CD14-positive monocyte (primary cell): ENCODE measurements at regions of chr4 and their contacts with region 1.

Region 1: DNA sequence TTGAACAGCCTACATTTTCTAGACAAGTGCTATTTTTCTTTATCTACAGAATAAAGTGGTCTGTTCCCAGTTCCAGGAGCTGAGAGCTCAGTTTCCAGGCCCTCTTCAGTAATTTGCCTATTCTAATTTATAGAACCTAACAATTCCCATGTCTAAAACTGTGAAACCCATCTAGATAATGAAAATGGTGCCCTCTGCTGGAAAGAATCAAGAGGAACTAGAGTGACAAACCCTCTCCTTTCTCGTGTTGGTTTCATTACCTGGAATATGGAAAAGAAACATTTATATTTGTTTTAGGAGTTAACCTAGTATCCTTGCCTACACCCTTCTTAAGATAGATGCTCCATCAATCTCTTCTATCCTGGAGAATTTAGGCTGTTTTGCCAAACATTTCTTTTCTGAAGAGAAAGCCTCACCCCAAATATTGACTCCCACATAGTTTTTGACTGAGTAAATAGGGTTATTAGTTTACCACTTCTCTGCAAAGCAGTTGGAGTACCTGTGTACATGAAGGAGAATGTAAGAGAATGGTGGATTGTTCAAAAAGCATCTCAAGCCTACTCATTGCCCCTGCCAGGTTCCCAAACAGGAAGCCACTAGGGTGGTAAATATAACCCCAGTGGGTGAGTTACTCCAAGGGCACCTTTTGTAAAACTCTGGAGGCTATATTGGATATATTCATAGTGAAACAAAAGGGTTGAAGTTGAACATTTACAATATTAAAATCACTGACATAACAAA is 121.6 kb downstream of the RASL11B start:
- DNase-seq: peak; percentile 9 to 44 (median 22)
- H3K4me3 ChIP-seq: no peak overlapping the region
- H3K4me3 Mint-ChIP-seq: no peak overlapping the region
- H3K27ac ChIP-seq: no peak overlapping the region
- H3K27ac Mint-ChIP-seq: no peak overlapping the region
- H3K4me1 ChIP-seq: no peaks in the 10 kb centered on the region
- H3K4me1 Mint-ChIP-seq: no peaks in the 10 kb centered on the region
- H3K27me3 ChIP-seq: no peaks in the 10 kb centered on the region
- H3K27me3 Mint-ChIP-seq: no peaks in the 10 kb centered on the region
- CTCF ChIP-seq: peak; percentile 76

Region 2: DNA sequence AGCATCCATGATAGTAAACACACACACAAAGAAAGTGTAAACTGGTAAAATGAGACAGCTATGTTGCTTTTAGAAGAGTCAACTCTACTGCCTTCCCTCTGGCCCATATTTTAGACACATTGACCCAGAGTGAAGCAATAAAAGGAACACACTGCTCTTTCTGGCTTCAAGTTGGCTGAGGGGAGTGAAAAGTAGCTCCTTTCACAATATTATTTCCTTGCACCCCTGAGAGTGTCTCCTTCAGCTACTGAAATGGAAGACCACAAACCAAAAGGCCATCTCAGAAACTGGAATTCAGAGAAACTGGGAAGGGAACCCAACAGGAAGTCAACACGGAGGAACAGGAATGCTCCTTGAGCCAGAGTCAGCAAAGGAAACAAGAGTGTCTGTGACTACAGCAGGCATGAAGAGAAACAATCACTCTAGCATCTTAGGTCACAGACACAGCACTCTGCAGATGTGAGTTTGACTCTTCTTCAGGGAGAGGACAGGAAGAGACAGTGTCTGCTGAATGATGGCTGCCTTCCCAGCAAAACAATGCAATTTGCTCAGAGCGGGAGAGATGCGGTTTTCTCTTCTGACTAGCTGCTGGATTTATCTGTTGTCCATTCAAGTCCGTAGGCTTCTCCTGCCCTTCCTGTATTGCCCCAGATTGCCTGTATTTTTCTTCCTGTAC is 826.0 kb before region 1 on chr4:
- intact Hi-C with region 1: no loop called
- DNase-seq: no peak
- H3K4me3 ChIP-seq: no peak overlapping the region
- H3K4me3 Mint-ChIP-seq: no peak overlapping the region
- H3K27ac ChIP-seq: no peak overlapping the region
- H3K27ac Mint-ChIP-seq: no peak overlapping the region
- H3K4me1 ChIP-seq: no peaks in the 10 kb centered on the region
- H3K4me1 Mint-ChIP-seq: no peaks in the 10 kb centered on the region
- H3K27me3 ChIP-seq: peaks cover 0 to 6% of the 10 kb centered on the region in 2 donors
- H3K27me3 Mint-ChIP-seq: peaks cover 0 to 5% (median 0%) of the 10 kb centered on the region in 3 donors
- CTCF ChIP-seq: no peak

Region 3: GRCh38 chr4:52376132-52376704 is 607.5 kb before region 1 on chr4:
- intact Hi-C with region 1: loop called (anchors 2 to 5 kb)
- DNase-seq: peak in 1 of 3 donors; percentile 4
- H3K4me3 ChIP-seq: no peak overlapping the region
- H3K4me3 Mint-ChIP-seq: no peak overlapping the region
- H3K27ac ChIP-seq: no peak overlapping the region
- H3K27ac Mint-ChIP-seq: no peak overlapping the region
- H3K4me1 ChIP-seq: no peaks in the 10 kb centered on the region
- H3K4me1 Mint-ChIP-seq: no peaks in the 10 kb centered on the region
- H3K27me3 ChIP-seq: no peaks in the 10 kb centered on the region
- H3K27me3 Mint-ChIP-seq: peaks cover 1 to 6% (median 3%) of the 10 kb centered on the region in 3 donors
- CTCF ChIP-seq: peak; percentile 81

Region 4: DNA sequence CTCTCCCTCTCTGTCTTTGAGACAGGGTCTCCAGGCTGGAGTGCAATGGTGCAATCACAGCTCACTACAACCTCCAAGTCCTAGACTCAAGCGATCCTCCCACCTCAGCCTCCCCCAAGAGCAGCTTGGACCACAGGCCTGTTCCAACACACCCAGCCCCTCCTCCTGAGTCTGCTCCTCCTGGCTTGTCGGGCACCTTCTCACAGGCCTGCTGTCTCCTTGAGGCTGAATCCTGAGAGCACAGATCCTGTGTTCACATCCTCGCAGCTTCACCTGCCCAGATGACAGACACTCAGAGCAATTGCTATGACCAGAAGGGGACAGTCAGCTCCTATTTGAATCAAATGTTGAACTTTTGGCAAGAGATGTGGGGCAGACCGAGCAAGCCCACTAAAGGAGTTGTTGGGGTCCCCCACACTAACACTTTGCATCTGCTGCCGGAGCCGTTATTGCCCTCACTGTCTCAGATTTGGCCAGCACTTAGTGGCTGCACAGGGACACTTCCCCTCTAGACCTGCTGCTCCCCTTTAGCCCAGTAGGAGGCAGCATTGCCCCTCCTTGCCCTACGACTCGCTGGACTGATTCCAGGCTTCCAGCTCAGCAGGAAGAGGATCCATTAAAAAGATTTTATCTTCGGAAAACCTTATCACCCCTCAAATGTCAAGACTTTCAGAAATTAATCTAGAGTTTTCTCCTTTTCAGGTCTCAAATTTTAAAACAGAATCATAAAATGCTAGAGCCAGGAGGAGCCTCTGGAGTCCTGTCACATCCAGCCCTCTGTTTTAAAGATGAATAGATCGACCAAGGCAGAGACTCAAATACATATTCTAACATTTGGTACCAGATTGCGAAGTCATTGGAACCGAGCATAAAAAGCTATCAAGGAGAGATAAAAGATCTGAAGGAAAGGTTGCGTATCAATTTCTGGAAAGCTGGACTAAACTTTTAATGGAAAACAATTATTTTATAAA is 438.3 kb before region 1 on chr4:
- intact Hi-C with region 1: loop called (anchors 2 to 5 kb)
- DNase-seq: peak; percentile 15 to 42 (median 39)
- H3K4me3 ChIP-seq: no peak overlapping the region
- H3K4me3 Mint-ChIP-seq: no peak overlapping the region
- H3K27ac ChIP-seq: no peak overlapping the region
- H3K27ac Mint-ChIP-seq: no peak overlapping the region
- H3K4me1 ChIP-seq: no peaks in the 10 kb centered on the region
- H3K4me1 Mint-ChIP-seq: no peaks in the 10 kb centered on the region
- H3K27me3 ChIP-seq: no peaks in the 10 kb centered on the region
- H3K27me3 Mint-ChIP-seq: peaks cover 0 to 3% (median 3%) of the 10 kb centered on the region in 3 donors
- CTCF ChIP-seq: peak; percentile 84